ENCODE measurements at regions of chr10 and their contacts with region 1.

Region 1: DNA sequence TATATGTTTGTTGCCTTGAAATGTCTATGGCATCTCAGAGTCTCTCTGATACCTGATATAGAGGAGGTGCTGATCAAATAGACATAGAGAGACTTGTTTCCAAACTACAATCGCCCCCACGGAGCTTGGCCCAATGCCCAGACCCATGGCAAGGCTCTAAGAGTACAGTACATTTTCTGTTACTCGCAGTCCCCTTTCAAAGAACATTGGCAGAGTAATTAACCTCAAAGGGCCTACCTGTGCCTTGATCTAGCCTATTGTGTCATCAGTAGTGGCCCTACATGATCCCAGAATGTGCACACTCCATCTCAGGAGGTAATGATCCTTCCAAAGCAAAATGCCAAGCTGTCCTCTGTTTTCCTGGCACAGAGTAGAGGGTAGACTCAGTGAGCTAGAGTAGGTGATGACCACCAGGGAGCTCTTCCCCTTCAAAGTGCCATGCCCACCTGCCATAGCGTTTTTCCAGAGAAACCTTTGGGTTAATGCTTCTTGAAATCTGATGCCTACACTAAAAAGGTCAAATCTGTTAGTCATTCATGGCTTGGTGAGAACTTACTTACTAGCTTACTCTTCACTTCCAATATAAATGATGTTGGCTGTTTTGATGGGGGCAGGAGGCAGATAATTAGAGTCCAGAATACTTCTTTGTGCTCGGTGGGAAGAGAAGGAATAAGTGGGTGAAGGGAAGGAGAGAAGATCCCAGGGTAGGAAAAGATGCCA is 41.2 kb upstream of the ACSL5 start:
- DNase-seq: no peak
- ATAC-seq: no peak
- H3K4me3 ChIP-seq: no peak overlapping the region
- H3K27ac ChIP-seq: no peak overlapping the region
- H3K4me1 ChIP-seq: peaks cover 0 to 10% of the 10 kb centered on the region in 2 experiments; a peak in 2 of 5 replicates
- H3K27me3 ChIP-seq: peaks cover 0 to 3% of the 10 kb centered on the region in 2 experiments; a peak in 1 of 5 replicates
- CTCF ChIP-seq: no peak
- EP300 ChIP-seq: no peak
- POLR2A ChIP-seq: no peak
- RAD21 ChIP-seq: no peak

Region 2: DNA sequence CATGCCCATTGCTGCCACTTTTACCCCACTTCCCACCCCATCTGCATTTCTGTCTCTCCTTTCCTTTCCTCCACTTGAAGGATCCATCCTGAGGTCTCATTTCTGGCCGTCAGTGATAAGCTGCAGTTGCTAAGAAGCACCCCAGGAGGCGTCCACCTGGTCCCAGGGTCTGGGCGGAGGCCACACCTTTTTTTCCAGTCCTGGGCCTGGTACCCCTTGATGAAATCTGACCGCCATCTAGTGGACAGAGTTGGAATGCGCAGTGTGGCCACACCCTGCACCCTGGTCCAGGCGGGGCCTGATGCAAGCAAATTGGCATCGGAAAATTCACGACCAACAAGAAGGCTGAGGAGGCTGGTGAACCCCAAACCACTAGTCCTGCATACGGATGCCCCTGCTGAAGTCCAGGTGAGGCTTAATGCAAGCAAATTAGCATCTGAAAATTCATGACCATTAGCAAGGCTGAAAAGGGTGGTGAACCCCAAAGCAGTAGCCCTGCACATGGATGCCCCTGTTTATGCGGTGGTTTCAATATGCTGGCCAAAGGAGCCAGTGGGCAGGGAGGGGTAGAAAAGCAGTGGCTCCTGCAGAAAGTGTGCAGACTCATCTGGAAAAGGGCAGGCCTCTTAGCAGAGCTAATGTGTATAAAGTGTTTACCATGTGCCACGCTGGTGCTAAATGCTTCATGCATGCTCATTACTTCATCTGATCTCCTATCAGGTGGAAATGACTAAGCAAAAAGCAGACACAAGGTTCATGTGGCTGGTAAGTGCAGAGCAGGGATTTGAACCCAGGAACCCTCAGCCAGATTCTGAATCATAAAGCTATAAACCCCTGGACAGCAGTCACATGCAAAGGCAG is 192.3 kb before region 1 on chr10:
- CTCF ChIA-PET with region 1: no interaction called
- POLR2A ChIA-PET with region 1: no interaction called
- in situ Hi-C with region 1: no loop called
- intact Hi-C with region 1: no loop called
- DNase-seq: peak; percentile 84 to 88 (median 86)
- ATAC-seq: peak; percentile 99
- H3K4me3 ChIP-seq: no peak overlapping the region
- H3K27ac ChIP-seq: no peak overlapping the region
- H3K4me1 ChIP-seq: no peaks in the 10 kb centered on the region; a peak in 2 of 5 replicates
- H3K27me3 ChIP-seq: peaks cover 0 to 16% of the 10 kb centered on the region in 2 experiments; a peak in 2 of 5 replicates
- CTCF ChIP-seq: peak; percentile 91 to 94 (median 93)
- EP300 ChIP-seq: no peak
- POLR2A ChIP-seq: no peak
- RAD21 ChIP-seq: peak; percentile 42 to 71

Region 3: DNA sequence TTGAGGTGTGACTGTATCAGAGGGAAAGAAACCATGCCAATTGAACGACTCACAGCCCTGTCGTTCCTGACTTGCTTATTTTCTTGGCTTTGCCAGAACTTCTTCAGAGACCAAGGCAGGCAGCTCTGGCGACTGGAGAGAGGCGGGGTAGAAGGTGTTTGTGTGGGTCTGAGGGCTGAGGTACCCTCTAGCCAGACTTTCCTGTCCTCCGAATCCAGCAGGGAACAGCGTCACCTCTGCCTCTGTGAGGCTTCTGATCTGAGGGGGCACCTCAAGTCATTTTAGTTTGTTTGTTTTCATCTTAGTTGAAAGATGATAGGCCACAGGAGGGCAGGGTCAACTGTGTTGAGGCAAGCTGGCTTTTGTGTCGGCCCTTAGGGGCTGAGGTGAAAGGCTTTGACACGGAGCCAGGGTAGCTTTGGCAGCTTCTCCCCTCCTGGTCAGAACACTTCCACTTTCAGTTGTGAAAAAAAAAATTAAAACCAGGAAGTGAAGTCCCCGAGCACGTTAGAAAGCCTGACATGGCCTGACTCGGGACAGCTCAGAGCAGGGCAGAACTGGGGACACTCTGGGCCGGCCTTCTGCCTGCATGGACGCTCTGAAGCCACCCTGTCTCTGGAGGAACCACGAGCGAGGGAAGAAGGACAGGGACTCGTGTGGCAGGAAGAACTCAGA is 43.2 kb after region 1 on chr10:
- CTCF ChIA-PET with region 1: no interaction called
- POLR2A ChIA-PET with region 1: no interaction called
- in situ Hi-C with region 1: loop called (anchors 5 kb)
- intact Hi-C with region 1: no loop called
- DNase-seq: no peak
- ATAC-seq: peak; percentile 34; the same call in 2 of the 3 replicates
- H3K4me3 ChIP-seq: no peak overlapping the region
- H3K27ac ChIP-seq: no peak overlapping the region
- H3K4me1 ChIP-seq: peaks cover 4 to 5% of the 10 kb centered on the region in 2 experiments; a peak in 3 of 5 replicates
- H3K27me3 ChIP-seq: no peaks in the 10 kb centered on the region
- CTCF ChIP-seq: no peak
- EP300 ChIP-seq: no peak
- POLR2A ChIP-seq: no peak
- RAD21 ChIP-seq: no peak

Region 4: GRCh38 chr10:112446855-112447711 is 114.4 kb after region 1 on chr10 and contains the starts of genes VTI1A and ZDHHC6:
- CTCF ChIA-PET with region 1: no interaction called
- POLR2A ChIA-PET with region 1: no interaction called
- in situ Hi-C with region 1: loop called (anchors 10 kb)
- intact Hi-C with region 1: no loop called
- DNase-seq: peak; percentile 73 to 88 (median 77)
- ATAC-seq: peak; percentile 97
- H3K4me3 ChIP-seq: peak within 1 kb of the TSS; percentile 73
- H3K27ac ChIP-seq: peak within 1 kb of the TSS; percentile 97
- H3K4me1 ChIP-seq: peaks cover 0 to 5% of the 10 kb centered on the region in 2 experiments; a peak in 2 of 5 replicates
- H3K27me3 ChIP-seq: no peaks in the 10 kb centered on the region
- CTCF ChIP-seq: peak; percentile 32 to 37 (median 36); a peak in 2 of 6 replicates
- EP300 ChIP-seq: no peak
- POLR2A ChIP-seq: peak; percentile 65
- RAD21 ChIP-seq: no peak
- polyA plus RNA-seq, gene VTI1A: 9.3 to 13.3 TPM
- polyA plus RNA-seq, gene ZDHHC6: 21.5 to 30.1 TPM